ENCODE measurements at regions of chr9 and their contacts with region 1.

Region 1: GRCh38 chr9:92728831-92729734 is 35.5 kb downstream of the BICD2 start:
- DNase-seq: no peak
- ATAC-seq: peak; percentile 85
- H3K4me3 ChIP-seq: peak overlapping the region; percentile 33; the same call in 1 of the 2 replicates
- H3K27ac ChIP-seq: 0 out of 2 replicates have a peak overlapping the region, but pooled peaks have one; percentile 32
- H3K4me1 ChIP-seq: peaks cover 35% of the 10 kb centered on the region
- H3K27me3 ChIP-seq: no peaks in the 10 kb centered on the region
- CTCF ChIP-seq: peak; percentile 43 to 58 (median 55); a peak in 5 of 6 replicates
- EP300 ChIP-seq: no peak
- POLR2A ChIP-seq: peak; percentile 31; the same call in 1 of the 2 replicates
- RAD21 ChIP-seq: peak; percentile 48

Region 2: DNA sequence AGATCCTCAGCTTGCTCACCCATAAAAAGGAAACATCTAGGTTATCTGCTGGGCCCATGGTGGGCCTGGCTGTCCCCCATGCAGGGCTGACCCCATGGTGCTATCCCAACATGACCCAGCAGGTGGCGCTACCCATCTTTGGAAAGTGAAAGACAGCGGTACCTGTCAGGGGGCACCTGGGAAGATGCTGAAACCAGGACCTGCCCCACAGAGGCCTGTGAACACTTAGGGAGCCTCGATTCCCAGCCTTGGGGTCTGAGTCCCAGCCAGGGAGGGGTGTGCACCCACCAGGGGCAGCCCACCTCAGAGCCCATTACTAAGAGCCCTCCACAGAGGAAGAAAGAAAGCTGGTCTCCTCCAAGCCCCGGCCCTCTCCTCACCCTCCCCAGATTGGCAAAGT is 12.5 kb before region 1 on chr9:
- CTCF ChIA-PET with region 1: interaction called, 13 read pairs
- POLR2A ChIA-PET with region 1: no interaction called
- RAD21 ChIA-PET with region 1: interaction called, 8 read pairs
- SMC1A ChIA-PET with region 1: interaction called, 4 read pairs
- in situ Hi-C with region 1: no loop called
- intact Hi-C with region 1: no loop called
- DNase-seq: no peak
- ATAC-seq: peak; percentile 90
- H3K4me3 ChIP-seq: no peak overlapping the region
- H3K27ac ChIP-seq: peak overlapping the region; percentile 58
- H3K4me1 ChIP-seq: peaks cover 46% of the 10 kb centered on the region
- H3K27me3 ChIP-seq: no peaks in the 10 kb centered on the region
- CTCF ChIP-seq: peak; percentile 85 to 93 (median 92)
- EP300 ChIP-seq: no peak
- POLR2A ChIP-seq: no peak
- RAD21 ChIP-seq: peak; percentile 92

Measured in GM12878 (cell line).